ENCODE measurements at regions of chr1 and their contacts with region 1.

Region 1: DNA sequence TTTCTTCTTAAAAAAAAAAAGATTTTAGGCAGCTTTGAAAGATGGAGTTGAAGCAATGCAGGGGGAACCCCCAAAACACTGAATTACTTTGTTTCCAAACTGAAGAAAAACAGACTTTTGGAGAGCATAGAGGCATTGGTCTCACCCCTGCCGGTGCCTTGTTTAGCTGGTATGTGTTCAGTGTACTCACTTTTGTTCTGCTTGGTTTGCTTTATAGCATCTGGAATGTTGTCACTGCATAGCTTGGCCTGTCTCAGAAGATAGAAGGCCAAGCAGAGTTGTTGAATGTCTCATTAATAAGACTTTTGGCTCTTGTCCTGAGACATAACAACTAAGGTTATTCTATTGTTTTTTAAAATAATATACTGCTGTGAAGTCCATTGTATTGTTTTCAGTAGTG is 6.9 kb downstream of the THRAP3 start:
- DNase-seq: no peak
- ATAC-seq: no peak
- H3K4me3 ChIP-seq: no peak overlapping the region
- H3K4me3 Mint-ChIP-seq: no peak overlapping the region
- H3K27ac ChIP-seq: no peak overlapping the region
- H3K27ac Mint-ChIP-seq: peak overlapping the region; percentile 42
- H3K4me1 ChIP-seq: peaks cover 32% of the 10 kb centered on the region
- H3K4me1 Mint-ChIP-seq: peaks cover 61% of the 10 kb centered on the region
- H3K27me3 ChIP-seq: no peaks in the 10 kb centered on the region
- H3K27me3 Mint-ChIP-seq: no peaks in the 10 kb centered on the region
- CTCF ChIP-seq: no peak

Region 2: GRCh38 chr1:36285448-36286101 is 54.4 kb after region 1 on chr1:
- CTCF ChIA-PET with region 1: no interaction called
- POLR2A ChIA-PET with region 1: no interaction called
- intact Hi-C with region 1: loop called in 1 of 2 experiments (anchors 5 kb)
- DNase-seq: peak; percentile 22 to 92 (median 50)
- ATAC-seq: peak; percentile 99
- H3K4me3 ChIP-seq: no peak overlapping the region
- H3K4me3 Mint-ChIP-seq: no peak overlapping the region
- H3K27ac ChIP-seq: no peak overlapping the region
- H3K27ac Mint-ChIP-seq: peak overlapping the region; percentile 34
- H3K4me1 ChIP-seq: no peaks in the 10 kb centered on the region
- H3K4me1 Mint-ChIP-seq: peaks cover 25% of the 10 kb centered on the region
- H3K27me3 ChIP-seq: no peaks in the 10 kb centered on the region
- H3K27me3 Mint-ChIP-seq: no peaks in the 10 kb centered on the region
- CTCF ChIP-seq: peak; percentile 83

Region 3: DNA sequence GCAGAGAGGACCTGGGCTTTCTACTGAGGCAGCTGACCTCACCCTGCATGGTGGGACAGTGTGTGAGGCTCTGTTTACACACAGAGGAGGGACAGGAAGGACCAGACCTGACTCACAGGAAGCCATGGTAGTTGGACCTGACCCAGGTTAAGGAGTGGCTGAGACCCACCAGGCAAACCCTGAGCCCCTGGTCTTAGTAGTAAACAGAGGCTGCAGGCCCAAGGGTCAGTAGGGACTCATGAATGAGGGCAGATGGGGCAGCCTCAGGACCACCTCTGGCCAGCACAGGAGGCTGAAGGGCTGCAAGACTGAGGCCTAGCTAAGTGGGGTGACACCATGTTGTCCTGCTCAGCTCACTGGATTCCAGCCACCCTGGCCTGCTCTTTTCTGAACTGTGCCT is 529.9 kb after region 1 on chr1:
- CTCF ChIA-PET with region 1: no interaction called
- POLR2A ChIA-PET with region 1: no interaction called
- intact Hi-C with region 1: no loop called
- DNase-seq: peak in 1 of 14 experiments; percentile 14
- ATAC-seq: no peak
- H3K4me3 ChIP-seq: no peak overlapping the region
- H3K4me3 Mint-ChIP-seq: no peak overlapping the region
- H3K27ac ChIP-seq: no peak overlapping the region
- H3K27ac Mint-ChIP-seq: no peak overlapping the region
- H3K4me1 ChIP-seq: no peaks in the 10 kb centered on the region
- H3K4me1 Mint-ChIP-seq: no peaks in the 10 kb centered on the region
- H3K27me3 ChIP-seq: peaks cover 0 to 4% of the 10 kb centered on the region in 2 experiments
- H3K27me3 Mint-ChIP-seq: peaks cover 10% of the 10 kb centered on the region
- CTCF ChIP-seq: no peak